Mammary epithelial cell (primary cell): ENCODE measurements at regions of chr19 and their contacts with region 1.

Region 1: GRCh38 chr19:5707576-5708575 is 12.1 kb downstream of the LONP1 start:
- DNase-seq: no peak
- H3K4me3 ChIP-seq: no peak overlapping the region
- H3K27ac ChIP-seq: no peak overlapping the region
- H3K4me1 ChIP-seq: no peaks in the 10 kb centered on the region
- H3K27me3 ChIP-seq: no peaks in the 10 kb centered on the region
- CTCF ChIP-seq: no peak

Region 2: GRCh38 chr19:5651361-5651760 is 56.5 kb before region 1 on chr19:
- CTCF ChIA-PET with region 1: no interaction called
- dilution Hi-C with region 1: loop called (anchors 5 kb)
- in situ Hi-C with region 1: no loop called
- intact Hi-C with region 1: no loop called
- DNase-seq: no peak
- H3K4me3 ChIP-seq: no peak overlapping the region
- H3K27ac ChIP-seq: no peak overlapping the region
- H3K4me1 ChIP-seq: no peaks in the 10 kb centered on the region
- H3K27me3 ChIP-seq: no peaks in the 10 kb centered on the region
- CTCF ChIP-seq: no peak

Region 3: DNA sequence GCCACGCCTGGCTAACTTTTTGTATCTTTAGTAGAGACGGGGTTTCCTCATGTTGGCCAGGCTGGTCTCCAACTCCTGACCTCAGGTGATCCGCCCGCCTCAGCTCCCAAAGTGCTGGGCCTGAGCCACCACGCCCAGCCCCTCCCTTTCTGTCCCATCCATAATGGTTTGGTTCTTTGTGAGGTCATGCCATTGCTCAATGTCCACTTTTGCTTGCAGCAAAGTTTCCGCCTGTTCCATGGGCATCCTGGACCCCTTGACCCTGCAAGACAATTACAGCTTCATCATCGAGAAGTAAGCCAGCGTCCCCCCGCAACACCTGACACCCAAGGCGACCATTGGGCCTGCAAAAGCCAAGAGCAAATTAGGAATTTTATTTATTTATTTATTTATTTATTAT is 60.1 kb after region 1 on chr19:
- CTCF ChIA-PET with region 1: no interaction called
- dilution Hi-C with region 1: no loop called
- in situ Hi-C with region 1: no loop called
- intact Hi-C with region 1: no loop called
- DNase-seq: no peak
- H3K4me3 ChIP-seq: no peak overlapping the region
- H3K27ac ChIP-seq: no peak overlapping the region
- H3K4me1 ChIP-seq: no peaks in the 10 kb centered on the region
- H3K27me3 ChIP-seq: no peaks in the 10 kb centered on the region
- CTCF ChIP-seq: no peak